MCF 10A (cell line): ENCODE measurements at regions of chr1 and their contacts with region 1.

Region 1: GRCh38 chr1:228212966-228213844 is 5.4 kb downstream of the OBSCN start:
- DNase-seq: peak; percentile 92
- H3K4me3 Mint-ChIP-seq: peak overlapping the region; percentile 88
- H3K27ac Mint-ChIP-seq: peak overlapping the region; percentile 74
- H3K4me1 Mint-ChIP-seq: peaks cover 8% of the 10 kb centered on the region
- H3K27me3 Mint-ChIP-seq: no peaks in the 10 kb centered on the region
- CTCF ChIP-seq: peak; percentile 69

Region 2: DNA sequence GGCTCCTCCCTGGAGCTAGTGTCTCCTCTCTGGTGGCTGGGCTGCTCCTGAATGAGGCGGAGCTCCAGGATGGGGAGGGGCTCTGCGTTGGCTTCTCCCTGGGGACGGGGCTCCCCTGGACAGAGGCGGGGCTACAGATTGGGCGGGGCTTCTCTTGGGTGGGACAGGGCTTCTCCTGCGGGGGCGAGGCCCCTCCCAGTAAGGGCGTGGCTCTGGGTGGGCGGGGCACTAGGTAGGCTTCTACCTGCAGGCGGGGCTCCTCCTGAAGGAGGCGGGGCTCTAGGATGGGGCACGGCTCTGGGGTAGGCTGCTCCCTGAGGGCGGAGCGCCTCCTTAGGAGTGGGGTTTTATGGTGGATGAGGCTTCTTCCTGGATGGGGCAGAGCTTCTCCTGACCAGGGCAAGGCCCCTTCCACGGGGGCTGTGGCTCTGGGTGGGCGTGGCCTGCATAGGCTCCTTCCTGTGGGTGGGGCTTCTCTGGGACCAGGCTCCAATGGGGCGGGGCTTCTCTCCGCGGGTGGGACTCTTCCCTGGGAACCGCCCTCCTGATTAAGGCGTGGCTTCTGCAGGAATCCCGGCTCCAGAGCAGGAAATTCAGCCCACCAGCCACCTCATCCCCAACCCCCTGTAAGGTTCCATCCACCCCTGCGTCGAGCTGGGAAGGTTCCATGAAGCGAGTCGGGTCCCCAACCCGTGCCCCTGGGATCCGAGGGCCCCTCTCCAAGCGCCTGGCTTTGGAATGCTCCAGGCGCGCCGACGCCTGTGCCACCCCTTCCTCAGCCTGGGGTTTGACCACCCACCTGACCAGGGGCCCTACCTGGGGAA is 153.4 kb before region 1 on chr1:
- CTCF ChIA-PET with region 1: no interaction called
- POLR2A ChIA-PET with region 1: no interaction called
- intact Hi-C with region 1: no loop called
- DNase-seq: peak; percentile 52
- H3K4me3 Mint-ChIP-seq: no peak overlapping the region
- H3K27ac Mint-ChIP-seq: no peak overlapping the region
- H3K4me1 Mint-ChIP-seq: no peaks in the 10 kb centered on the region
- H3K27me3 Mint-ChIP-seq: peaks cover 38% of the 10 kb centered on the region
- CTCF ChIP-seq: no peak

Region 3: DNA sequence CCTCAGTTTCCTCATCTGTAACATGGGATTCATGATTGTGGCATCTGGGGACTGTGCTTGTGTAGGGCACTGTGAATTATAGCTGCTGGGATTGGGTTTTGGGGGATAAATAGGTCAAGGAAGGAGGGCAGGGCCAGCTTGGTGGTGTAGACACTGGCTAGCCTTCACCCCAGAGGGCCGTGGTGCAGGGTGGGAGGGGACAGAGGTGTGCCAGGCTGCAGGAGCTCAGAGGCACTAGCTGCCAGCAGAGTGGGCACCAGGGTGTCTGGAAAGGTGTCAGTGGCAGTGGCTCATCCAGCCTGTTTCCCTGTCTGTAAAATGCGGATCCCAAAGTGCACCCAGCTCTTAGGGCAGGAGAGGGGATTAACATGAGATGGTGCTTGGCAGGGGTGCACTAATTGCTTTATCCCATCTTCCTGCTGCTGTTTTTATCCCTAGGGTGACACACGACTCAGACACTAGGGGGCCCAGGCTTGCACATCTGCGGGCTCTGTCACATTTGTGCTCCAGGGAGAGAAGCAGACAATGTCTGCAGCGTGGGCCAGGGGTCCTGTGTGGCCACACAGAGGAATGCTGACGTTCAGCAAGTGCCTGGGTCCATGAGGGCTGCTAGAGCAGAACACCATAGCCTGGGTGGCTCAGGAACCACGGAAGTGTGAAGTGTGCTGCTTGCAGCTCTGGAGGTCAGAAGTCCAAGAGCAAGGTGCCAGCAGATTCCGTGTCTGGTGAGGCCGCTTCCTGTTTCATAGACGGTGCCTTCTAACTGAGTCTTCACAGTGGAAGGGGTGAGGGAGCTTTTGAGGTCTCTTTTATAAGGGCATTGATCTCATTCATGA is 14.0 kb after region 1 on chr1:
- CTCF ChIA-PET with region 1: interaction called, 28 read pairs
- POLR2A ChIA-PET with region 1: interaction called, 15 read pairs
- intact Hi-C with region 1: loop called (anchors 1 kb)
- DNase-seq: peak; percentile 42
- H3K4me3 Mint-ChIP-seq: no peak overlapping the region
- H3K27ac Mint-ChIP-seq: peak overlapping the region; percentile 93
- H3K4me1 Mint-ChIP-seq: peaks cover 15% of the 10 kb centered on the region
- H3K27me3 Mint-ChIP-seq: no peaks in the 10 kb centered on the region
- CTCF ChIP-seq: peak; percentile 31

Region 4: DNA sequence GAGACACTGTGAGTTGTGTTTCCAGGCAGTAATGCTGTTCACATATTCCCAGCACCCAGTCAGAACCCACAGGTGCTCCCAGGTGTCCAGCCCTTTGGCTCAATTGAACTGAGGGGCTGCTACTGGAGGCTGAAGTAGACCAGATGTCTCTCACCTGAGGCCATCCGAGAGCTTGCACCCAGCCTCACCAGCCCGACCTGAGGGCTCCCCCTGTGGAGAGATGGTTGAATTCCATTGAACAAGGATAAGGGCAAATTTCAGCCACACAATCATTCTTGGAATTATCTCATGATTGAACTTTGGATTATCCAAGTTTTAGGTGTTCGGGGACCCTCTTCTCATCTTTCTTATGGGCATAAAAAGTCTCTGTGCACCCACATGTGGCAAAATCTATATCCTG is 46.7 kb after region 1 on chr1:
- CTCF ChIA-PET with region 1: interaction called, 4 read pairs
- POLR2A ChIA-PET with region 1: no interaction called
- intact Hi-C with region 1: loop called (anchors 1 kb)
- DNase-seq: peak; percentile 56
- H3K4me3 Mint-ChIP-seq: no peak overlapping the region
- H3K27ac Mint-ChIP-seq: no peak overlapping the region
- H3K4me1 Mint-ChIP-seq: no peaks in the 10 kb centered on the region
- H3K27me3 Mint-ChIP-seq: no peaks in the 10 kb centered on the region
- CTCF ChIP-seq: peak; percentile 40

Region 5: DNA sequence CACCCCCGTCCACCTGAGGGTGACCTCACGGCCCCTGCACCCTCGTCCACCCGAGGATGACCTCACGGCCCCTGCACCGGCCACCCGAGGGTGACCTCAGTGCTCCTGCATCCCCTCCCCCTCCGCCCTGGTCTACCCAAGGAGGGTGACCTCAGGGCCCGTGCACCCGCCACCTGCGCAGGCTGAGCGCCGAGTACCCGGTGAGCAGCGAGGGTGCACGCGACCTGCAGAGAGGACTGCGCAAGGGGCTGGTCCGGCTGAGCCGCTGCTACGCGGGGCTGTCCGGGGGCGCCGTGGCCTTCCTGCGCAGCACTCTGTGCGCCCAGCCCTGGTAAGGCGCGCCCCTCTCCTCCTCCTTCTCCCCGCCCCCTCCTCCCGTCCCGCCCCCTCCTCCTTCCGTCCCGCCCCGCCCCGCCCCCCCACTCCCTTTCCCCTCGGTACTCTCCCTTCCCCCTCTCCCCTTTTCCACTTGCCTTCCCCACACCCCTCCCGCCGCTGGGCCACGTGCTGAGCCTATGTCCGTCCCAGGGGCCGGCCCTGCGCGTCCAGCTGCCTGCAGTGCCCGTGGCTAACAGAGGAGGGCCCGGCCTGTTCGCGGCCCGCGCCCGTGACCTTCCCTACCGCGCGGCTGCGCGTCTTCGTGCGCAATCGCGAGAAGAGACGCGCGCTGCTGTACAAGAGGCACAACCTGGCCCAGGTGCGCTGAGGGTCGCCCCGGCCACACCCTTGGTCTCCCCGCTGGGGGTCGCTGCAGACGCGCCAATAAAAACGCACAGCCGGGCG is 165.1 kb after region 1 on chr1:
- CTCF ChIA-PET with region 1: interaction called, 4 read pairs
- POLR2A ChIA-PET with region 1: no interaction called
- intact Hi-C with region 1: loop called (anchors 5 kb)
- DNase-seq: peak; percentile 88
- H3K4me3 Mint-ChIP-seq: peak overlapping the region; percentile 95
- H3K27ac Mint-ChIP-seq: peak overlapping the region; percentile 84
- H3K4me1 Mint-ChIP-seq: peaks cover 21% of the 10 kb centered on the region
- H3K27me3 Mint-ChIP-seq: no peaks in the 10 kb centered on the region
- CTCF ChIP-seq: peak; percentile 91

Region 6: DNA sequence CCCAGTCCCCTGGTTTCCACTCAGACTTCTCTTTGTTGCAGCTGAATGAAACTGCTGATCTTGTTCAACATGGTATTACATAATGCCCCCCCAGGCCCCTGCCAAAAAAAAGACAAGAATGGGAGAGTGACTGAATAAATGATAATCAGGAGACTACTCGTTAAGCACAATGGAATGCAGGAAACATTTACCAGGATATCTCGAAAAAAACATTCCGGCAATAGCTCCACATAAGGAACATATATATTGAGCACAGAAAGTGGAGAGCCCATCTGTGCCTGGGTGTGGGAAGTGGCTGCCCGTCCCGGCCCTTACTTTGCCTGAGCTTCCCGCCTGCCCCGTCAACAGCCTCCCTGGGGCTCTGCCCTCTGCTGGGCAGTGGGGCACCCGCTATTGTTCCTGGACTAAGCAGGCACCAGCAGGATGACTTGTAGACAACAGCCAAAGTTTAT is 180.1 kb after region 1 on chr1:
- CTCF ChIA-PET with region 1: interaction called, 4 read pairs
- POLR2A ChIA-PET with region 1: no interaction called
- intact Hi-C with region 1: loop called (anchors 1 kb)
- DNase-seq: peak; percentile 82
- H3K4me3 Mint-ChIP-seq: no peak overlapping the region
- H3K27ac Mint-ChIP-seq: peak overlapping the region; percentile 75
- H3K4me1 Mint-ChIP-seq: peaks cover 17% of the 10 kb centered on the region
- H3K27me3 Mint-ChIP-seq: no peaks in the 10 kb centered on the region
- CTCF ChIP-seq: peak; percentile 64